ENCODE measurements at regions of chr15 and their contacts with region 1.

Region 1: DNA sequence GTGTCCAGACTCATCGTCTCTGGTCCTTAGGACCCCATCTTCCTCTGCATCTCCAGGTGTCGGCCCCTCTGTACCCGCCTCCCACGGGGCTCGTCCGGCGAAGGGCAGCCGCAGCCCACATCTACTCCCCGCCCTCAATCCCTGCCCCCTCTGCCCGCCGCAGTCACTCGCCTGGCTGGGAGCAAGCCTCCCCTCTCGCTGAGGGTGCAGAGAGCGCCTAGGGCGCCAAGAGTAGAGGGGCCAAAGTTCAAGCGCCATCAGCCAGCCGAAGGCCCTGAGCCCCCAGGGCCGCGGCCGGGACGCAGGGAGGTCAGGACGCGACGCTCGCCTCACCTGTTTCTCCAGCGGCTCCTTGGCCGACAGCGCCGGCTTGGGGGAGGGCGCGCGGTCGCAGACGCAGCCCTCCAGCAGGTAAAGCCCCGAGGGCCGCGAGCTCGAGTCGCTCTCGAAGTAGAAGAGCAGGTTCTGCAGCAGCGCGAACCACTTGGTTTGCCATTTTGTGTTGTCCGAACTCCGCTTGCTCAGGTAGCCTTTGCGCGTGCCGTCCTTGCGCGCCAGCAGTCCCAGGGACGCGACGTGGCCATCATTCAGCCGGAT is 592 bp downstream of the RASGRF1 start:
- DNase-seq: no peak
- ATAC-seq: no peak
- H3K4me3 ChIP-seq: peak overlapping the region in 5 of 10 donors; percentile 15 to 41 (median 22)
- H3K27ac ChIP-seq: no peak overlapping the region
- H3K4me1 ChIP-seq: peaks cover 0 to 24% (median 20%) of the 10 kb centered on the region in 9 donors
- H3K27me3 ChIP-seq: peaks cover 25 to 92% (median 85%) of the 10 kb centered on the region in 7 donors
- CTCF ChIP-seq: no peak

Region 2: GRCh38 chr15:78481917-78482316 is 608.1 kb before region 1 on chr15:
- intact Hi-C with region 1: no loop called
- DNase-seq: no peak
- ATAC-seq: no peak
- H3K4me3 ChIP-seq: no peak overlapping the region
- H3K27ac ChIP-seq: no peak overlapping the region
- H3K4me1 ChIP-seq: no peaks in the 10 kb centered on the region
- H3K27me3 ChIP-seq: no peaks in the 10 kb centered on the region
- CTCF ChIP-seq: no peak

Region 3: DNA sequence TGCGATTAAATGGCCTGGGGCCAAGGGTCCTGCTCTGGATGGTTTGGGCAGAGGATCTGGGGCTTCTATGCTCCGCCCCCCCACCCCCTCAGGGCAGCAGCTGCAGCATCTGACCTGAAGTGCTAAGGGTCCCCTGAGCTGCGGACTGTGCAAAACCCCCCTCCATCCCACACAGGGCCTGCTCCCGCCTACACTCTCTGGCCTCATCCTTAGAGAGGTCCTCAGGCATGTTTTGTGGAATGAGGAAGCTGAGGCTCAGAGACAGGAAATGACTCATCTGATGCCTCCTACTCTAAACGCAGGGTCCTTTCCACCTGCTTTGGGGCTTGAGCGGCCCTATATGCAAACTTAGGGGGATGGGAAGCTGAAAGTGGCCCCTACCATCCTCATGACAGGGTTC is 85.7 kb before region 1 on chr15:
- intact Hi-C with region 1: no loop called
- DNase-seq: no peak
- ATAC-seq: peak in 7 of 8 donors; percentile 52 to 80 (median 73)
- H3K4me3 ChIP-seq: no peak overlapping the region
- H3K27ac ChIP-seq: no peak overlapping the region
- H3K4me1 ChIP-seq: peaks cover 0 to 22% (median 0%) of the 10 kb centered on the region in 9 donors
- H3K27me3 ChIP-seq: no peaks in the 10 kb centered on the region
- CTCF ChIP-seq: no peak

Region 4: GRCh38 chr15:79140839-79141570 is 51.0 kb after region 1 on chr15:
- intact Hi-C with region 1: loop called in 1 of 10 experiments (anchors 10 kb)
- DNase-seq: no peak
- ATAC-seq: no peak
- H3K4me3 ChIP-seq: no peak overlapping the region
- H3K27ac ChIP-seq: no peak overlapping the region
- H3K4me1 ChIP-seq: peaks cover 0 to 6% (median 0%) of the 10 kb centered on the region in 9 donors
- H3K27me3 ChIP-seq: peaks cover 0 to 12% (median 0%) of the 10 kb centered on the region in 7 donors
- CTCF ChIP-seq: no peak

Measured in heart right ventricle (tissue), 16 donors.